Astrocyte of the cerebellum (primary cell): ENCODE measurements at regions of chr7 and their contacts with region 1.

Region 1: DNA sequence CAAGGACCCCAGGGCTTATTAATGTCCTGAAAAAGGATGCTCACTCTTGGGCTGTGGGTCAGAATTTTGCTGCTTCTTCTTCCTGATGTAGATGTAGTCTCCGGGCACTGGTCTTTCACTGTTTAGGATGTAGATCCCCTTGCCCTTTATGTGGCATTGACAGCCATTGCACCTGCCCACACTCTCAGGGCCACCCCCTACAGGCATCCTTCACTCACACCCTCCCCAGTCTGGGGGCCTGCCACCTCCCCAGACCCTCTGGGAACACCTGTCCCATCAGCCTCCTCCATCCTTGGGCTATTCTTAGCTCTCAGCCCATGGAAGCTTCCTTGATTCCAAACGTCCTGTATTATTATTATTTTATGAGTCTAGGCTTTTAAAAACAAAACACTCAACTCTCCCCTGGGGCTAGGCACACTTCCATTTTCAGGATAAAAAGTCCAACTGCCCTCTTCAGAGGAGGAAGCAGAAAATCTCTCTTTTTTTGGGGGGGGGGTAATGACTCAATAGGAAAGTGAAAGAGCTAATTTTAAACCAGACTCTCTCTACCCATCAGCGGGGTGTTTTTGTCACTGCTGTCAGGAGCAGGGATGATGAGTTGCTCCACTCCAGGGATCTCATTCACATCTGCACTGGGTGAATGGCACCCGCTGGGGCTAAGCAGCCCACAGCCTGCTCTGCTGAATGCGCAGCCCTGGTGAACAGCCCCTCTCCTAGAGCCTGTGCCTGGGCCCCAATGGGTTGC is 11.5 kb upstream of the KLRG2 start:
- DNase-seq: no peak
- H3K4me3 ChIP-seq: no peak overlapping the region
- CTCF ChIP-seq: no peak

Region 2: GRCh38 chr7:139393621-139394211 is 101.3 kb before region 1 on chr7:
- in situ Hi-C with region 1: loop called (anchors 5 kb)
- DNase-seq: no peak
- H3K4me3 ChIP-seq: no peak overlapping the region
- CTCF ChIP-seq: no peak

Region 3: GRCh38 chr7:139541600-139542307 is 46.7 kb after region 1 on chr7:
- in situ Hi-C with region 1: no loop called
- DNase-seq: no peak
- H3K4me3 ChIP-seq: no peak overlapping the region
- CTCF ChIP-seq: no peak

Region 4: GRCh38 chr7:139566736-139567647 is 72.0 kb after region 1 on chr7:
- in situ Hi-C with region 1: loop called (anchors 5 kb)
- DNase-seq: no peak
- H3K4me3 ChIP-seq: no peak overlapping the region
- CTCF ChIP-seq: no peak

Region 5: GRCh38 chr7:139783647-139784385 is 288.8 kb after region 1 on chr7:
- in situ Hi-C with region 1: no loop called
- DNase-seq: no peak
- H3K4me3 ChIP-seq: no peak overlapping the region
- CTCF ChIP-seq: no peak